Caco-2 (cell line): ENCODE measurements at regions of chr2 and their contacts with region 1.

Region 1: GRCh38 chr2:25201265-25201664 is 32.9 kb upstream of the POMC start:
- DNase-seq: no peak
- H3K4me3 ChIP-seq: no peak overlapping the region
- H3K4me3 Mint-ChIP-seq: no peak overlapping the region
- H3K27ac Mint-ChIP-seq: no peak overlapping the region
- H3K4me1 ChIP-seq: no peaks in the 10 kb centered on the region
- H3K4me1 Mint-ChIP-seq: peaks cover 6% of the 10 kb centered on the region
- H3K27me3 ChIP-seq: no peaks in the 10 kb centered on the region
- H3K27me3 Mint-ChIP-seq: no peaks in the 10 kb centered on the region
- CTCF ChIP-seq: peak; percentile 40

Region 2: GRCh38 chr2:24971536-24972314 is 229.5 kb before region 1 on chr2 and contains the start of gene DNAJC27:
- CTCF ChIA-PET with region 1: interaction called, 5 read pairs
- POLR2A ChIA-PET with region 1: no interaction called
- intact Hi-C with region 1: loop called (anchors 1 kb)
- DNase-seq: peak; percentile 98
- H3K4me3 ChIP-seq: peak within 1 kb of the TSS; percentile 55
- H3K4me3 Mint-ChIP-seq: peak within 1 kb of the TSS; percentile 90
- H3K27ac Mint-ChIP-seq: peak within 1 kb of the TSS; percentile 98
- H3K4me1 ChIP-seq: no peaks in the 10 kb centered on the region
- H3K4me1 Mint-ChIP-seq: no peaks in the 10 kb centered on the region
- H3K27me3 ChIP-seq: no peaks in the 10 kb centered on the region
- H3K27me3 Mint-ChIP-seq: no peaks in the 10 kb centered on the region
- CTCF ChIP-seq: no peak
- total RNA-seq, gene DNAJC27: 5.1 and 6.1 TPM in 2 replicates

Region 3: DNA sequence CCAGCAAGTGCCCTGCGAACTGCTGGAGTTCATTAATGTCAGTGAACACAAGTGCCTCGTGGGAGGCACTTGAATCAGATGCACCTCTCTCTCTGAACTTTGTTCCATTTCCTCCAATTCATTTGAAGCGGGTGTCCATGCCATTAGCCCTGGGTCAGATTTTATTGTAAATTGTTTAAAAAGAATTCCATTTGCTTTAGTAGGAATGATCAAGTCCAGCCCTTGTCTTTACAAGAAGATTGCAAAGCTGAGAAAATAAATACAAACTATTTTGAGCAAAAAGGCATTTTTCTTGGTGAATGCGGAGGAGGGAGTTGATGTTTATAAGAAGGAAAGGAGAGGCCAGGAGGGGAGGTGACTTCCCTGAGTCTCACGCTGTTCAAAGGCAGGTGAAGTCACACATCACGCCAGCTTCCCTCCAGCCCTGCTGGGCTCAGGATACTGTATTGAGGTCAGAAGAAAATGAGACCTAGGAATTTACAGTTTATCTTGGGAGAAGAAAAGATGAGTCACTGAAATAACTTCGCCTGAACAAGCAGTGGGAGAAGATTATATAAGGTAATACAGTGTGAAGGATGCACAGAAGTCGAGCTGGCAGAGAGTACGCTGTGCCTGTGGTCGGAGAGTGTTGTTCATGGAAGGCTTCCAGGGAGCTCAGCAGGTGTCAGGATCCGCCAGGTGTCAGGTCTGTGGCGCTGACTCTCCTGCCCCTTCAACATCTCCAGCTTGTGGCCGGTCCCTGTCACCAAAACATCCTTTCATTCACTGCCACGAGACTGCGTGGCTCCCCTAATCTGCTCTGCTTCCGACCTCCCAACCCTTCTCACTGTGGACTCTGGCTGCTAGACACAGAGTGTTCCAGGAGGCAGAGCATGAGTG is 122.9 kb before region 1 on chr2:
- CTCF ChIA-PET with region 1: no interaction called
- POLR2A ChIA-PET with region 1: no interaction called
- intact Hi-C with region 1: loop called (anchors 2 kb)
- DNase-seq: peak; percentile 56 to 66
- H3K4me3 ChIP-seq: no peak overlapping the region
- H3K4me3 Mint-ChIP-seq: peak overlapping the region; percentile 67
- H3K27ac Mint-ChIP-seq: peak overlapping the region; percentile 71
- H3K4me1 ChIP-seq: peaks cover 17% of the 10 kb centered on the region
- H3K4me1 Mint-ChIP-seq: peaks cover 18% of the 10 kb centered on the region
- H3K27me3 ChIP-seq: no peaks in the 10 kb centered on the region
- H3K27me3 Mint-ChIP-seq: no peaks in the 10 kb centered on the region
- CTCF ChIP-seq: no peak

Region 4: DNA sequence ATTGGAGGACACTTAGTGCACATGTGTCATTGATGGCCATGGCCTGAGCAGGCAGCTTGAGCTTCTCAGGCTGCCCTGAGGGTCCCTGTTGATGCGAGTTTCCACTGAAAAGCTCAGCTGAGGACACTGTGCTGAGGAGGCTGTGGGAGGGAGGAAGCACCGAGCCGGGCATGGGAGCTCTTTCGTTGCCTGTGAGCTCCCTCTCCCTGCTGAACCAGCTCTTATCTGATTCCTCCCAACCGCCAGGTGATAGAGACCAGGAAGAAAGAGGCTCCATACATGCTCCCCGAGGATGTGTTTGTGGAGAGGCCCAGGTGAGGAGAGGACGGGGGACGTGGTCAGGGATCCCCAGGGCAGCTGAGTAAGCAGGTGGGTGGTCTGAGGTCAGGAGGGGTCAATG is 60.1 kb before region 1 on chr2:
- CTCF ChIA-PET with region 1: no interaction called
- POLR2A ChIA-PET with region 1: no interaction called
- intact Hi-C with region 1: loop called (anchors 2 kb)
- DNase-seq: no peak
- H3K4me3 ChIP-seq: no peak overlapping the region
- H3K4me3 Mint-ChIP-seq: no peak overlapping the region
- H3K27ac Mint-ChIP-seq: no peak overlapping the region
- H3K4me1 ChIP-seq: peaks cover 16% of the 10 kb centered on the region
- H3K4me1 Mint-ChIP-seq: no peaks in the 10 kb centered on the region
- H3K27me3 ChIP-seq: no peaks in the 10 kb centered on the region
- H3K27me3 Mint-ChIP-seq: no peaks in the 10 kb centered on the region
- CTCF ChIP-seq: no peak

Region 5: GRCh38 chr2:25184261-25184695 is 17.0 kb before region 1 on chr2:
- CTCF ChIA-PET with region 1: no interaction called
- POLR2A ChIA-PET with region 1: no interaction called
- intact Hi-C with region 1: loop called (anchors 1 kb)
- DNase-seq: peak in 1 of 2 experiments; percentile 58
- H3K4me3 ChIP-seq: no peak overlapping the region
- H3K4me3 Mint-ChIP-seq: peak overlapping the region; percentile 27
- H3K27ac Mint-ChIP-seq: peak overlapping the region; percentile 56
- H3K4me1 ChIP-seq: peaks cover 31% of the 10 kb centered on the region
- H3K4me1 Mint-ChIP-seq: peaks cover 26% of the 10 kb centered on the region
- H3K27me3 ChIP-seq: no peaks in the 10 kb centered on the region
- H3K27me3 Mint-ChIP-seq: no peaks in the 10 kb centered on the region
- CTCF ChIP-seq: no peak